ENCODE measurements at regions of chr1 and their contacts with region 1.

Region 1: GRCh38 chr1:161132410-161133219 is at the start of gene DEDD:
- DNase-seq: peak; percentile 82 to 97 (median 92)
- H3K4me3 ChIP-seq: peak within 1 kb of the TSS; percentile 57 to 88 (median 73)
- H3K27ac ChIP-seq: peak within 1 kb of the TSS; percentile 84 to 99 (median 96)
- H3K27me3 ChIP-seq: no peaks in the 10 kb centered on the region
- CTCF ChIP-seq: peak in 26 of 56 donors; percentile 4 to 42 (median 24)
- total RNA-seq, gene DEDD: 23.9 to 40.2 (median 30.5) TPM

Region 2: GRCh38 chr1:160997323-160998038 is 135.1 kb before region 1 on chr1:
- intact Hi-C with region 1: loop called in 1 of 2 experiments (anchors 10 kb)
- DNase-seq: peak in 8 of 10 donors; percentile 5 to 58 (median 46)
- H3K4me3 ChIP-seq: no peak overlapping the region
- H3K27ac ChIP-seq: peak overlapping the region in 22 of 59 donors; percentile 6 to 78 (median 42)
- H3K27me3 ChIP-seq: no peaks in the 10 kb centered on the region
- CTCF ChIP-seq: peak in 53 of 56 donors; percentile 29 to 67 (median 52)

Region 3: GRCh38 chr1:161045750-161046571 is 86.7 kb before region 1 on chr1 and contains the start of gene USF1:
- intact Hi-C with region 1: loop called in 1 of 2 experiments (anchors 5 kb)
- DNase-seq: peak; percentile 84 to 94 (median 92)
- H3K4me3 ChIP-seq: peak within 1 kb of the TSS; percentile 62 to 98 (median 92)
- H3K27ac ChIP-seq: peak within 1 kb of the TSS; percentile 88 to 100 (median 98)
- H3K27me3 ChIP-seq: no peaks in the 10 kb centered on the region
- CTCF ChIP-seq: peak in 27 of 56 donors; percentile 5 to 53 (median 23)
- total RNA-seq, gene USF1: 46.0 to 87.0 (median 63.2) TPM

Region 4: GRCh38 chr1:161098210-161099068 is 34.2 kb before region 1 on chr1 and contains the start of gene KLHDC9:
- intact Hi-C with region 1: loop called in 1 of 2 experiments (anchors 1 kb)
- DNase-seq: peak; percentile 51 to 90 (median 80)
- H3K4me3 ChIP-seq: peak within 1 kb of the TSS; percentile 55 to 96 (median 78)
- H3K27ac ChIP-seq: peak within 1 kb of the TSS in 58 of 59 donors; percentile 36 to 93 (median 81)
- H3K27me3 ChIP-seq: no peaks in the 10 kb centered on the region
- CTCF ChIP-seq: peak in 18 of 56 donors; percentile 1 to 45 (median 7)
- total RNA-seq, gene KLHDC9: 15.1 to 54.9 (median 36.9) TPM

Region 5: GRCh38 chr1:161117759-161118581 is 14.6 kb before region 1 on chr1 and contains the starts of genes NIT1 and PFDN2:
- intact Hi-C with region 1: loop called in 1 of 2 experiments (anchors 2 kb)
- DNase-seq: peak; percentile 77 to 94 (median 86)
- H3K4me3 ChIP-seq: peak within 1 kb of the TSS; percentile 74 to 100 (median 98)
- H3K27ac ChIP-seq: peak within 1 kb of the TSS; percentile 48 to 96 (median 89)
- H3K27me3 ChIP-seq: no peaks in the 10 kb centered on the region
- CTCF ChIP-seq: peak in 31 of 56 donors; percentile 5 to 50 (median 27)
- total RNA-seq, gene NIT1: 28.2 to 55.3 (median 40.7) TPM
- total RNA-seq, gene PFDN2: 50.1 to 108 (median 72.3) TPM

Region 6: GRCh38 chr1:161153679-161154426 is 21.2 kb after region 1 on chr1 and contains the start of gene UFC1:
- intact Hi-C with region 1: loop called (anchors 2 kb)
- DNase-seq: peak; percentile 69 to 92 (median 82)
- H3K4me3 ChIP-seq: peak within 1 kb of the TSS; percentile 55 to 96 (median 78)
- H3K27ac ChIP-seq: peak within 1 kb of the TSS; percentile 68 to 99 (median 97)
- H3K27me3 ChIP-seq: no peaks in the 10 kb centered on the region
- CTCF ChIP-seq: peak in 15 of 56 donors; percentile 4 to 55 (median 23)
- total RNA-seq, gene UFC1: 55.5 to 108 (median 76.8) TPM

Region 7: GRCh38 chr1:161266202-161266601 is 133.6 kb after region 1 on chr1:
- intact Hi-C with region 1: no loop called
- DNase-seq: no peak
- H3K4me3 ChIP-seq: no peak overlapping the region
- H3K27ac ChIP-seq: peak overlapping the region in 11 of 59 donors; percentile 1 to 53 (median 27)
- H3K27me3 ChIP-seq: peaks cover 0 to 5% (median 0%) of the 10 kb centered on the region in 45 donors
- CTCF ChIP-seq: no peak

Region 8: DNA sequence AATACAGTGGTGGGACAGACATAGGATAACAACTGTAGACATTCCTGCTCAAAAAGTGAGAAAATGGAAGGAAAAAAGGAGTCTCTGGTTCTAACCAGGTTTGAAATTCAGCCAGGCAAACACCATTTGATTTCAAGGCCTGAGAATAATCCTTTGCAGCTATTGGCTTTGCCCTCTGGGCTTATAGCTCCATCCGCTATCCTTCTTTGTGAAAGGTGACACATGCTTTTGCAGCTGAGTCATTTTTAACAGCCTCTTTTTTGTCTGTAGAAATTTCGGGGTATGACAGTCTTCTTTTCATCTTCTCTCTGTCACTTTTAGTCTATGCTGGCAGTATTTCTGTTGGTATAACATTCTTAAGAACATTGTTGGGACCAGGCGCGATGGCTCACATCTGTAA is 197.7 kb after region 1 on chr1:
- intact Hi-C with region 1: no loop called
- DNase-seq: no peak
- H3K4me3 ChIP-seq: no peak overlapping the region
- H3K27ac ChIP-seq: no peak overlapping the region
- H3K27me3 ChIP-seq: no peaks in the 10 kb centered on the region
- CTCF ChIP-seq: no peak

Measured in dorsolateral prefrontal cortex (tissue), 120 donors.